Testis (tissue), 5 donors: ENCODE measurements at regions of chr4 and their contacts with region 1.

Region 1: DNA sequence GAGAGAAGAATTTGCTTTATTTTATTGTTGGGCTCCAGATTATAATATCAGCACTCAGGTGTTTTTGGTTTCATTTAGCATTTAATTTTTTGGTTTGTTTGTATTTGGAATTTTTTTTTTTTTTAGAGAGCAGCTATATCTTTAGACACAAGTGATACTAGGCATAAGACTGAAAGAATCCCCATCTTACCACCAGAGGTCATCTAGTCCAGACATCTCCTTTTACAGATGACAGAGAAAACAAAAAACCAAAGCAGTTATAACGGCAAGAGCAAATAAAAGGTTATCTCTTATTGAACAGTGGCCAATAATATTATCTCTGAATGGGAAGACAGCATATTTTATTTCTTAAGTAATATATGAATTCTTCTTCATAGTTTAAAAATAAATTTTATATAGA is 22.8 kb downstream of the USP38 start:
- DNase-seq: no peak
- H3K4me3 ChIP-seq: no peak overlapping the region
- H3K27ac ChIP-seq: no peak overlapping the region
- H3K4me1 ChIP-seq: no peaks in the 10 kb centered on the region
- H3K27me3 ChIP-seq: no peaks in the 10 kb centered on the region
- CTCF ChIP-seq: peak; percentile 20 to 46 (median 35)
- POLR2A ChIP-seq: no peak

Region 2: GRCh38 chr4:142933207-142933606 is 274.4 kb before region 1 on chr4:
- intact Hi-C with region 1: no loop called
- DNase-seq: no peak
- H3K4me3 ChIP-seq: no peak overlapping the region
- H3K27ac ChIP-seq: no peak overlapping the region
- H3K4me1 ChIP-seq: no peaks in the 10 kb centered on the region
- H3K27me3 ChIP-seq: no peaks in the 10 kb centered on the region
- CTCF ChIP-seq: no peak
- POLR2A ChIP-seq: no peak

Region 3: GRCh38 chr4:143156853-143157252 is 50.7 kb before region 1 on chr4:
- intact Hi-C with region 1: no loop called
- DNase-seq: no peak
- H3K4me3 ChIP-seq: no peak overlapping the region
- H3K27ac ChIP-seq: no peak overlapping the region
- H3K4me1 ChIP-seq: no peaks in the 10 kb centered on the region
- H3K27me3 ChIP-seq: no peaks in the 10 kb centered on the region
- CTCF ChIP-seq: no peak
- POLR2A ChIP-seq: no peak

Region 4: DNA sequence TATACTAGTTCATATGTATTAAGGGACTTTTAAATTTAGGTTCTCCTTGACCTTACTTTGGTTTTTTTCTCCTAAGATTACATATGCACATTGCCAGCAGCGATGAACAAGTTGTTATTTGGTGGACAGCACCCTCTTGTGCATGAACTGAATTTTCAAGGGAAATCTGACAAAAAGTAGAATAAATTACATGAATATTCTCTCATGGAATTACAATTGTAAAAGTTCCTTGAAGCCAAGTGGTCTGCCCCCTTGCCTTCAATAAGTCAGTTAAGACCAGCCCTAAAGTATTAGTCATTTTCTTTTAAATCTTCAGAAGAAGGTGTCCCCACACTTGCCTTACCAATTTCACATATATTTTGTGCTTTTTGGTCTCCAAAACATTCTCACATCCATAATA is 275.3 kb after region 1 on chr4:
- intact Hi-C with region 1: loop called (anchors 10 kb)
- DNase-seq: peak; percentile 33
- H3K4me3 ChIP-seq: no peak overlapping the region
- H3K27ac ChIP-seq: no peak overlapping the region
- H3K4me1 ChIP-seq: no peaks in the 10 kb centered on the region
- H3K27me3 ChIP-seq: no peaks in the 10 kb centered on the region
- CTCF ChIP-seq: peak; percentile 51 to 67 (median 61)
- POLR2A ChIP-seq: no peak

Region 5: DNA sequence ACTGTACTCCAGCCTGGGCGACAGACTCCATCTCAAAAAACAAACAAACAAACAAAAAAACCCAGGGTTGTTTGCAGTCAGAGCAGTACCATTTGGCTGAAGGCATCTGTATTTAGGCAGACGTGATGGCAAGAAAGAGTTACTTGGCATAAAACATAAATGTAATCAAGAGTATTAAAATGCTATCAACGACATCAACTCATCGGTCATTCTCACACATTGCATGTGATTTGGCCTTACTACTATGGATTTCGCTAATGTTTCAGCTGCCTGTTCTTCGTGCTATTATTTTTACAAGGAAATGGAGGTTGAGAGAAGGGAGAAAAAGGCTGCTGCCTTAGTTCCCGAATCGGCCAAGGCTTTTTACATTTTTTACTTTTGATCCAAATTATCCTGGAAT is 290.5 kb after region 1 on chr4:
- intact Hi-C with region 1: no loop called
- DNase-seq: no peak
- H3K4me3 ChIP-seq: no peak overlapping the region
- H3K27ac ChIP-seq: no peak overlapping the region
- H3K4me1 ChIP-seq: no peaks in the 10 kb centered on the region
- H3K27me3 ChIP-seq: no peaks in the 10 kb centered on the region
- CTCF ChIP-seq: no peak
- POLR2A ChIP-seq: no peak